Naive thymus-derived CD4-positive, alpha-beta T cell (primary cell): ENCODE measurements at regions of chr6 and their contacts with region 1.

Region 1: DNA sequence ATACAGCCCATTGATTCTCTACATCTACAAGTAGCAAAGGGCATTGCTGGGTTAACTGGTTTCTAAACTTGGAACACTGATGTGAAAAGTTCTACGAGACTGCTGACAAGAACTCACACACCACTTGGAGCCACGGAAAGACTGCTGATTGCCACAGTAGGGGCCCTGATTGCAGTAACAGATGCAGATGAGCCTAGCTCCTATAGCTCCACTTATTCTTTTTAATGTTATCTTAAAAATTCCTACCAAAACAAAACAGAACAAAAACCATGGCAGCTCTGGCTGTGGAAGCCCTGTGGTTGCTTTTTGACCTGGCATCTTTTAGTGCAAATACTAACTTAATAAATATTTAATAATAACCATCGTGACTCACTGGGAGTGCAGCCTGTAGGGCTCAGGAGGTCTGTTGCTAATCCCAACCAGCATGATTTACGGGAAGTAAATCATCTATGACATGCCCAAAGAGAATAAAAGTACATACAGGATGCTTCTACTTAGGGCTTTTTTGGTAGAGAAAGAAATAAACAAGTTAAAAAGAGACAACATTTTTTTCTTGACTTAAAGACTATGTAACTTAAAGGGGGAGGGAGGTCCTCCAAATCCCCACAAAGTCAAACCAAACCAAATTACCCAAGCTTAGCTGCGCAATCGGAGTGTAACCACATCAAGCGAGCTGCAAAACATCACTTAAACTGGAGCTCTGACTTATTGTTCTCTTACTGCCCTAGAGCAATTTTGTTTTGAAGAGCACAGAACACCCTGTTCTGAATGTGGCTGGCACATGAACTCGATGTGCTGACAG is 87.2 kb downstream of the FKBP5 start:
- DNase-seq: peak in 8 of 9 donors; percentile 42 to 96 (median 92)
- ATAC-seq: peak; percentile 90
- H3K4me3 ChIP-seq: peak overlapping the region; percentile 58
- H3K4me3 Mint-ChIP-seq: peak overlapping the region; percentile 69 to 90 (median 86)
- H3K27ac ChIP-seq: peak overlapping the region; percentile 87
- H3K27ac Mint-ChIP-seq: peak overlapping the region; percentile 90 to 97 (median 93)
- H3K4me1 ChIP-seq: peaks cover 77 to 80% of the 10 kb centered on the region in 2 donors
- H3K4me1 Mint-ChIP-seq: peaks cover 35 to 90% (median 78%) of the 10 kb centered on the region in 7 donors
- H3K27me3 ChIP-seq: no peaks in the 10 kb centered on the region
- H3K27me3 Mint-ChIP-seq: no peaks in the 10 kb centered on the region

Region 2: GRCh38 chr6:35583893-35584688 is 17.4 kb before region 1 on chr6:
- CTCF ChIA-PET with region 1: interaction called, 87 read pairs
- POLR2A ChIA-PET with region 1: interaction called, 426 read pairs
- intact Hi-C with region 1: loop called (anchors 1 kb)
- DNase-seq: peak; percentile 43 to 81 (median 75)
- ATAC-seq: peak; percentile 84
- H3K4me3 ChIP-seq: no peak overlapping the region
- H3K4me3 Mint-ChIP-seq: peak overlapping the region in 8 of 10 donors; percentile 16 to 62 (median 46)
- H3K27ac ChIP-seq: peak overlapping the region; percentile 16
- H3K27ac Mint-ChIP-seq: peak overlapping the region; percentile 38 to 94 (median 92)
- H3K4me1 ChIP-seq: peaks cover 7 to 57% of the 10 kb centered on the region in 2 donors
- H3K4me1 Mint-ChIP-seq: peaks cover 31 to 92% (median 79%) of the 10 kb centered on the region in 7 donors
- H3K27me3 ChIP-seq: no peaks in the 10 kb centered on the region
- H3K27me3 Mint-ChIP-seq: no peaks in the 10 kb centered on the region

Region 3: GRCh38 chr6:35590622-35591066 is 10.9 kb before region 1 on chr6:
- CTCF ChIA-PET with region 1: interaction called, 87 read pairs
- POLR2A ChIA-PET with region 1: interaction called, 426 read pairs
- intact Hi-C with region 1: loop called in 1 of 2 experiments (anchors 1 kb)
- DNase-seq: no peak
- ATAC-seq: no peak
- H3K4me3 ChIP-seq: no peak overlapping the region
- H3K4me3 Mint-ChIP-seq: peak overlapping the region in 7 of 10 donors; percentile 1 to 80 (median 64)
- H3K27ac ChIP-seq: peak overlapping the region; percentile 56
- H3K27ac Mint-ChIP-seq: peak overlapping the region in 8 of 9 donors; percentile 70 to 95 (median 92)
- H3K4me1 ChIP-seq: peaks cover 26 to 94% of the 10 kb centered on the region in 2 donors
- H3K4me1 Mint-ChIP-seq: peaks cover 48 to 99% (median 91%) of the 10 kb centered on the region in 7 donors
- H3K27me3 ChIP-seq: no peaks in the 10 kb centered on the region
- H3K27me3 Mint-ChIP-seq: no peaks in the 10 kb centered on the region

Region 4: DNA sequence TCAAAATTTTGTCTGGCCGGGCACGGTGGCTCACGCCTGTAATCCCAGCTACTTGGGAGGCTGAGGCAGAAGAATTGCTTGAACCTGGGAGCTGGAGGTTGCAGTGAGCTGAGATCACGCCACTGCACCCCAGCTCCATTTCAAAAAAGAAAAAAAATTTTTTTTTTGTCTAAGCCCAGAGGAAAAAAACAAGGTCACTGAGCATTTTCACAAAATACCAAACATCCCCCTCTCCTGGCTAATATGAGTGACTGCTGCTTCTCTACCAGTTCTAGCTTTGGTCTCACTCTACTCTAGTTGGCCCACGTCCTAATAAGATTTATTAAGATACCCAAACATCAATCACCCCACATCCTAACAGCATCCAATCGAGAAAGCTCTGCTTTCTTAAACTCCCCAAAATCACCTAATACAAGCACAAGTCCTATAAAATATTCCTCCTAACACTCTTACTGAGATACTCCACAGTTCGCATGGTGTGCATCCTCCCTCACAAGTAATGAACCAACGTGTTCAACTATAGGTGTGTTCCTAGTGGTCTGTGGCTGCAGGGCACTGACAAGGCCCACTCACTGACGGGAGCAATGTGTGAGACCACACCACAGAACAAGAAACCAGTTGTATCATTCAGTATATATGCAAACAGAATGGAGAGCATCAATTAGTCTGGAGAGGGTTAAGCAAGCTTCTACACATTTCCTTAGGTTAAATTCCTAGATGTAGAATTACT is 23.0 kb after region 1 on chr6:
- CTCF ChIA-PET with region 1: interaction called, 272 read pairs
- POLR2A ChIA-PET with region 1: interaction called, 402 read pairs
- intact Hi-C with region 1: loop called (anchors 1 to 2 kb)
- DNase-seq: peak in 7 of 9 donors; percentile 40 to 75 (median 70)
- ATAC-seq: peak; percentile 88
- H3K4me3 ChIP-seq: no peak overlapping the region
- H3K4me3 Mint-ChIP-seq: peak overlapping the region in 9 of 10 donors; percentile 11 to 49 (median 34)
- H3K27ac ChIP-seq: peak overlapping the region; percentile 66
- H3K27ac Mint-ChIP-seq: peak overlapping the region; percentile 64 to 93 (median 90)
- H3K4me1 ChIP-seq: peaks cover 5 to 35% of the 10 kb centered on the region in 2 donors
- H3K4me1 Mint-ChIP-seq: peaks cover 13 to 66% (median 55%) of the 10 kb centered on the region in 7 donors
- H3K27me3 ChIP-seq: no peaks in the 10 kb centered on the region
- H3K27me3 Mint-ChIP-seq: no peaks in the 10 kb centered on the region

Region 5: DNA sequence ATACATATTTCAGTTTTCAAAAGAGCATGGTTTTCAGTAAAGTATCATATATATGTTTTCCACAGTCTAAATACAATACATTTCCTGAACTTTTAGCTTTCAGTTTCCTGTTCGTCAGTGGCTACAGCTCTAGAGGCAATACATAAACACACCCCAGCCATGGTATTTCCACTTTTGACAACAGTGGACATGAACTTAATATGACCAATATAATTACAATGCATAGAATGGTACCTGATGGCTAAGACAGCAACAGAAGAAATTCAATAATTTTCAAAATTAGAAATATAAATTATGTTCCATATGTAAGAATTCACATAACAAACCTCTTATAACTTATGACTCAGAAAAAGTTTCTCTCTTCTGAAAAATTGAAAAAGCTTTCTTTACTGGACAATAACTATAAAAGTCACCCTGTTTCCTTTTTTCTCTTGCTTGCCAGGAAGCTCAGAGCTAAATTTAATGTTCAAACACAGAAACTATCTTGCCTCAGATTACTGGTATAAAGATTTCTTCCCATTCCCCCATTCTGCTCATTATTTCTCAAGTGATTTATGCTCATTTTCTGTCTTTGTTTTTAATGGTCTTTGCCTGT is 68.0 kb after region 1 on chr6:
- CTCF ChIA-PET with region 1: no interaction called
- POLR2A ChIA-PET with region 1: interaction called, 12 read pairs
- intact Hi-C with region 1: loop called in 1 of 2 experiments (anchors 5 kb)
- DNase-seq: peak in 4 of 9 donors; percentile 29 to 57 (median 38)
- ATAC-seq: peak; percentile 78
- H3K4me3 ChIP-seq: peak overlapping the region; percentile 43
- H3K4me3 Mint-ChIP-seq: peak overlapping the region in 9 of 10 donors; percentile 56 to 88 (median 81)
- H3K27ac ChIP-seq: peak overlapping the region; percentile 79
- H3K27ac Mint-ChIP-seq: peak overlapping the region in 7 of 9 donors; percentile 84 to 98 (median 93)
- H3K4me1 ChIP-seq: peaks cover 33 to 48% of the 10 kb centered on the region in 2 donors
- H3K4me1 Mint-ChIP-seq: peaks cover 32 to 63% (median 48%) of the 10 kb centered on the region in 7 donors
- H3K27me3 ChIP-seq: no peaks in the 10 kb centered on the region
- H3K27me3 Mint-ChIP-seq: no peaks in the 10 kb centered on the region

Region 6: GRCh38 chr6:35688581-35689322 is 87.2 kb after region 1 on chr6 and contains the start of gene FKBP5:
- CTCF ChIA-PET with region 1: interaction called, 3 read pairs
- POLR2A ChIA-PET with region 1: interaction called, 7 read pairs
- intact Hi-C with region 1: loop called in 1 of 2 experiments (anchors 2 kb)
- DNase-seq: peak; percentile 76 to 92 (median 82)
- ATAC-seq: peak; percentile 96
- H3K4me3 ChIP-seq: peak within 1 kb of the TSS; percentile 99
- H3K4me3 Mint-ChIP-seq: peak within 1 kb of the TSS; percentile 90 to 100 (median 97)
- H3K27ac ChIP-seq: peak within 1 kb of the TSS; percentile 92
- H3K27ac Mint-ChIP-seq: peak within 1 kb of the TSS; percentile 89 to 98 (median 95)
- H3K4me1 ChIP-seq: peaks cover 5 to 13% of the 10 kb centered on the region in 2 donors
- H3K4me1 Mint-ChIP-seq: peaks cover 6 to 18% (median 15%) of the 10 kb centered on the region in 7 donors
- H3K27me3 ChIP-seq: no peaks in the 10 kb centered on the region
- H3K27me3 Mint-ChIP-seq: no peaks in the 10 kb centered on the region
- total RNA-seq, gene FKBP5: 56.7 to 83.3 (median 79.4) TPM

Region 7: DNA sequence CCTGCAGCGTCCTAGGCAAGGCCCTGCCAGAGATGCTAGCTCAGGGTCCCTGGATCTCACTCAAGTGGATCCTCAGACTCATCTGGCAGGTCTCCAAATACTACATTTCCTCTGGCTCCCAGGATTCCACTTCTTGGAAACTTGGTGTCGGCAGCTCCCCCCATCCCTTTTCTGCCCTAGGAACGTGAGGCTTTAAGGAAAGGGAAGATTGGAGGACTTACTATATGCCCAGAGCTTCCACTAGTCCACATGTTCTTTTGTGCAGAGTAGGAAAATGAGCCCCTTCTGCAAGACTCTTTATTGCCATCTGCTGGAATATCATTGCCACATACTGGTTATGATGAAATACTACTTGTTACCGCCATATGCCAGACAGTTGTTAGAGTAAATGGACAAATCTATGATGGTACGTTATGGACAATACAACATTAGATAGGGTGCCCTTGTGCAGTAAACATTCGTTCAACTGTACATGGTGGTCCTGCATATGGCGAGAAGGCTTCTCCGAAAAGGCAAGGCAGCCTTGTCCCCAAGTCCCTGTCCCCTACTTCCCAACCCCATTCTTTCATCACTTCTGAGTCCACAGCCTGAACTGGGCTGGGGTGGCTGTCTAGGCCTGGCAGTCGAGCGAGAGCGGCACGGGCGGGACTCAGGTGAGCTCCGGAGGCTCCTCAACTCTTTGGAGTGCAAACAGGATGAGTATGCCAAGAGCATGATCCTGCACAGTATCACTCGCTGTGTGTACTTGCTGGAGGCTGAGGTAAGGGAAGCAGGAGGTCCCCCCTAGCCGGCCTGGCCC is 136.1 kb after region 1 on chr6:
- CTCF ChIA-PET with region 1: interaction called, 43 read pairs
- POLR2A ChIA-PET with region 1: interaction called, 157 read pairs
- intact Hi-C with region 1: loop called in 1 of 2 experiments (anchors 1 kb)
- DNase-seq: peak in 7 of 9 donors; percentile 60 to 80 (median 73)
- ATAC-seq: peak; percentile 83
- H3K4me3 ChIP-seq: no peak overlapping the region
- H3K4me3 Mint-ChIP-seq: peak overlapping the region in 8 of 10 donors; percentile 51 to 75 (median 62)
- H3K27ac ChIP-seq: peak overlapping the region; percentile 22
- H3K27ac Mint-ChIP-seq: peak overlapping the region; percentile 28 to 98 (median 90)
- H3K4me1 ChIP-seq: peaks cover 31 to 51% of the 10 kb centered on the region in 2 donors
- H3K4me1 Mint-ChIP-seq: peaks cover 21 to 50% (median 42%) of the 10 kb centered on the region in 7 donors
- H3K27me3 ChIP-seq: no peaks in the 10 kb centered on the region
- H3K27me3 Mint-ChIP-seq: no peaks in the 10 kb centered on the region

Region 8: GRCh38 chr6:36386495-36387439 is 785.2 kb after region 1 on chr6:
- CTCF ChIA-PET with region 1: no interaction called
- POLR2A ChIA-PET with region 1: no interaction called
- intact Hi-C with region 1: no loop called
- DNase-seq: peak in 4 of 9 donors; percentile 13 to 21 (median 17)
- ATAC-seq: peak; percentile 62
- H3K4me3 ChIP-seq: peak overlapping the region; percentile 79
- H3K4me3 Mint-ChIP-seq: peak overlapping the region; percentile 88 to 99 (median 94)
- H3K27ac ChIP-seq: peak overlapping the region; percentile 14
- H3K27ac Mint-ChIP-seq: peak overlapping the region in 7 of 9 donors; percentile 43 to 96 (median 79)
- H3K4me1 ChIP-seq: peaks cover 5 to 14% of the 10 kb centered on the region in 2 donors
- H3K4me1 Mint-ChIP-seq: peaks cover 18 to 51% (median 19%) of the 10 kb centered on the region in 7 donors
- H3K27me3 ChIP-seq: no peaks in the 10 kb centered on the region
- H3K27me3 Mint-ChIP-seq: peaks cover 0 to 37% (median 29%) of the 10 kb centered on the region in 5 donors